Activated naive CD4-positive, alpha-beta T cell treated with anti-CD3 and anti-CD28 coated beads for 36 hours (primary cell): ENCODE measurements at regions of chr4 and their contacts with region 1.

Region 1: GRCh38 chr4:82284858-82285805 is 88.7 kb downstream of the HNRNPD start:
- DNase-seq: peak; percentile 100
- H3K4me3 Mint-ChIP-seq: peak overlapping the region; percentile 73
- H3K27ac Mint-ChIP-seq: no peak overlapping the region
- H3K4me1 Mint-ChIP-seq: peaks cover 12% of the 10 kb centered on the region
- H3K27me3 Mint-ChIP-seq: no peaks in the 10 kb centered on the region

Region 2: GRCh38 chr4:81562093-81562492 is 723.0 kb before region 1 on chr4:
- CTCF ChIA-PET with region 1: no interaction called
- intact Hi-C with region 1: loop called (anchors 1 kb)
- DNase-seq: no peak
- H3K4me3 Mint-ChIP-seq: no peak overlapping the region
- H3K27ac Mint-ChIP-seq: no peak overlapping the region
- H3K4me1 Mint-ChIP-seq: peaks cover 21% of the 10 kb centered on the region
- H3K27me3 Mint-ChIP-seq: no peaks in the 10 kb centered on the region

Region 3: GRCh38 chr4:81990898-81991297 is 294.2 kb before region 1 on chr4:
- CTCF ChIA-PET with region 1: no interaction called
- intact Hi-C with region 1: no loop called
- DNase-seq: no peak
- H3K4me3 Mint-ChIP-seq: no peak overlapping the region
- H3K27ac Mint-ChIP-seq: no peak overlapping the region
- H3K4me1 Mint-ChIP-seq: no peaks in the 10 kb centered on the region
- H3K27me3 Mint-ChIP-seq: peaks cover 10% of the 10 kb centered on the region

Region 4: GRCh38 chr4:82123934-82124333 is 161.2 kb before region 1 on chr4:
- CTCF ChIA-PET with region 1: no interaction called
- intact Hi-C with region 1: no loop called
- DNase-seq: peak; percentile 28
- H3K4me3 Mint-ChIP-seq: no peak overlapping the region
- H3K27ac Mint-ChIP-seq: no peak overlapping the region
- H3K4me1 Mint-ChIP-seq: peaks cover 4% of the 10 kb centered on the region
- H3K27me3 Mint-ChIP-seq: no peaks in the 10 kb centered on the region

Region 5: GRCh38 chr4:82268050-82268825 is 16.9 kb before region 1 on chr4:
- CTCF ChIA-PET with region 1: interaction called, 19 read pairs
- intact Hi-C with region 1: no loop called
- DNase-seq: peak; percentile 70
- H3K4me3 Mint-ChIP-seq: no peak overlapping the region
- H3K27ac Mint-ChIP-seq: no peak overlapping the region
- H3K4me1 Mint-ChIP-seq: peaks cover 18% of the 10 kb centered on the region
- H3K27me3 Mint-ChIP-seq: no peaks in the 10 kb centered on the region

Region 6: DNA sequence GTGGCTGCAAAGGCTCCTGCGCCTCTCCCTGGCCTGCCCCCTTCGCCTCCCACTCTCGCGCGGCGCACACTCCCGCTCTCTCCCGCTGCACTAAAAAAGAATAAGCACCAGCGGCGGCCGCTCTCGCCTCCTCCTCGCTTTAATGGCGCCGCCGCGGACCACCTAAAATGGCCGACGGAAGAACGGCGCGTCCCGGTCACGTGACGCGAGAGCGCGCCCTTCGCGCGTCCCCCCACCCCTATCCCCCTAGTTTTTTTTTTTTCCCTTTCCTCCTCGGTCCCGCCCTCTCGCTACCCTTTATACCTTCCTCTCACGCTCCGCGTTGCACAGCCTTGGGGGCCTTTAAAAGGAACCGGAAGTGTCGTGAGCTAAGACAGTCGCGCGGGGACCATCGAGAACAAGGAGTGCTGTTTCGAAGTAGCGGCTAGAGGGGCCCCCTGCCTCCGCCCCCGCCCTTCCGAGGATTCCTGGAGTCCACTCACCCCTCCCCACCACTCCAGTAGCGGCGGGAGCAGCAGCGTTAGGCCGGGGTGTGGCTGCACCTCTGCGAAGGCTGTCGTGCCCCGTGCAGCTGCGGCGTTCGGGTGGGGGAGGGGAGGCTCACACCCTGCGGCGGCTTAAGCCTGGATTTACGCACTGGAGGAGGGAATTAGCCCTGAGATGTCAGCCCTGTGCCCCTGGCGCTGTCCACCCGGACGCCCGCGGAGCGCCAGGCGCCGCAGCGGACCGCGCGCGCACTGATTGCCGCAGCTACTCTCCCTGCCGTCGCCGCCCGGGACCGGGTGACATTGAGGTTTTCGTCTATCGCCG is 88.9 kb after region 1 on chr4 and contains the start of gene HNRNPD:
- CTCF ChIA-PET with region 1: no interaction called
- intact Hi-C with region 1: loop called (anchors 1 kb)
- DNase-seq: peak; percentile 96
- H3K4me3 Mint-ChIP-seq: peak within 1 kb of the TSS; percentile 95
- H3K27ac Mint-ChIP-seq: peak within 1 kb of the TSS; percentile 95
- H3K4me1 Mint-ChIP-seq: peaks cover 33% of the 10 kb centered on the region
- H3K27me3 Mint-ChIP-seq: no peaks in the 10 kb centered on the region
- total RNA-seq, gene HNRNPD: 340 to 367 TPM

Region 7: GRCh38 chr4:82508806-82509428 is 223.8 kb after region 1 on chr4:
- CTCF ChIA-PET with region 1: no interaction called
- intact Hi-C with region 1: no loop called
- DNase-seq: no peak
- H3K4me3 Mint-ChIP-seq: no peak overlapping the region
- H3K27ac Mint-ChIP-seq: no peak overlapping the region
- H3K4me1 Mint-ChIP-seq: no peaks in the 10 kb centered on the region
- H3K27me3 Mint-ChIP-seq: peaks cover 12% of the 10 kb centered on the region

Region 8: DNA sequence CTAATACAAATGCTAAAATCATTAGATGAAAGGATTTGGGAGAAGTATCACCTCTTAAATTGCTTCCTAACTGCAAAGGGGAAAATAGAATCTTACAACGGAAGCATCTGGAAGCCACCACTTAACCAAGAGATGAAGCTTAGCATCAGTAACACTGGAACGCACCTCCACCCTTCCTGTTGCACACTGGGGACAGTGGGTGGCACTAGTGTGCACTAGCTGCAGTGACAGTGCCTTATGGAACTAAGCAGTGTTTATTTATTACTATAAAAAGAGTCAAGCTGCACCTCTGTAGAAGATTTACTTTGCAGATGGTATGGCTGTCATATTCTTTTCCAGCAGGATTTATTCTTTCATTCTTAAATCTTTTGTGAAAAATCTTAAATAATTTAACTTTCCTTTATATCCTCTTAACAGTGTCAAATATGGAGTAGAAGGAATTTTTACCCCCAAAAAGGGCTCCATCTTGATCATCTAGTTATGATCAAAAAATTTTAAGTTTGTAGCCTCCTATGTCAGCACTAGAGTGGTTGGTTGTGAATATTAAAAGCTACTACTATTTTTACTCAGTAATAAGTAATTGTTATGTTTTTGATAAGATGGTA is 436.8 kb after region 1 on chr4:
- CTCF ChIA-PET with region 1: no interaction called
- intact Hi-C with region 1: no loop called
- DNase-seq: peak; percentile 33
- H3K4me3 Mint-ChIP-seq: no peak overlapping the region
- H3K27ac Mint-ChIP-seq: no peak overlapping the region
- H3K4me1 Mint-ChIP-seq: no peaks in the 10 kb centered on the region
- H3K27me3 Mint-ChIP-seq: no peaks in the 10 kb centered on the region

Region 9: DNA sequence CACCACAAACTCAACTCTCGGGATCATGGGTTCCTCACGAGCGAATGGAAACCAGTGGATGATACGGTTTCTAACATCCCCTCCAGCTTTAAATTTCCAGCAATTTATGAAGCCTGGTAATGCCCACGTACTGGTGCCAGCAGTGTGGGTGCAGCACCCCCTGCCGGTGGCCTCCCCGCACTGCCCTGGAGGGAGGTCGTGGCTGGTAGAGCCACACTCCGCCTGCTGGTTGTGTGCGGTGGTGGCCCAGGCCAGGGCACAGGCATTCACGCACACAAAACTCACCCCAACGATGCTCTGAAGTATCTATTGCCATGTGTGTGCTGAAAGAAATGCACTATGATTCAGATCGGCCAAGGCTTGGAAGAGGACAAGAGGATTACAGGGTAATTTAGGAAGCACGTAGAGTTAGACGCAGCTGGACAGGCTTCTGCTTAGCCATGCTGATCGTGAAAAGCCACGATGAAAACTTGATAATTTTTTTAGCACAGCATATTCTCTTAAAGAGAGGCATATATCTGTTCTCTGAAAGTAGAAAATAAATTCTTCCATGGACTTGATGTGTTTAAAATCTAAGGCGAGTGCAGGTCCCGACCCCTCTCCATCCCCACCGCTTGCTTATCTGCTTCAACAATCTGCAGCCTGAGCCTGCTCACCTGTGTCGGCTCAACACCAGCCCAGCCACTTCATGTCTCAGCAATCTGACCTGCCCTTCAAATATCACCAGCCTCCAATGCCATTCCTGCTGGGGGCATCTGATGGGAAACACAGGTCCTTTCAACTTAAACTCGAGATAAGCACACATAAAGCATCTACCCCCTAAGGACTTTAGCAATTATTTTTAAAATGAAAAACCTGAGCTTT is 454.4 kb after region 1 on chr4:
- CTCF ChIA-PET with region 1: interaction called, 4 read pairs
- intact Hi-C with region 1: loop called (anchors 10 kb)
- DNase-seq: peak; percentile 85
- H3K4me3 Mint-ChIP-seq: no peak overlapping the region
- H3K27ac Mint-ChIP-seq: no peak overlapping the region
- H3K4me1 Mint-ChIP-seq: no peaks in the 10 kb centered on the region
- H3K27me3 Mint-ChIP-seq: no peaks in the 10 kb centered on the region